B cell (primary cell): ENCODE measurements at regions of chr2 and their contacts with region 1.

Region 1: DNA sequence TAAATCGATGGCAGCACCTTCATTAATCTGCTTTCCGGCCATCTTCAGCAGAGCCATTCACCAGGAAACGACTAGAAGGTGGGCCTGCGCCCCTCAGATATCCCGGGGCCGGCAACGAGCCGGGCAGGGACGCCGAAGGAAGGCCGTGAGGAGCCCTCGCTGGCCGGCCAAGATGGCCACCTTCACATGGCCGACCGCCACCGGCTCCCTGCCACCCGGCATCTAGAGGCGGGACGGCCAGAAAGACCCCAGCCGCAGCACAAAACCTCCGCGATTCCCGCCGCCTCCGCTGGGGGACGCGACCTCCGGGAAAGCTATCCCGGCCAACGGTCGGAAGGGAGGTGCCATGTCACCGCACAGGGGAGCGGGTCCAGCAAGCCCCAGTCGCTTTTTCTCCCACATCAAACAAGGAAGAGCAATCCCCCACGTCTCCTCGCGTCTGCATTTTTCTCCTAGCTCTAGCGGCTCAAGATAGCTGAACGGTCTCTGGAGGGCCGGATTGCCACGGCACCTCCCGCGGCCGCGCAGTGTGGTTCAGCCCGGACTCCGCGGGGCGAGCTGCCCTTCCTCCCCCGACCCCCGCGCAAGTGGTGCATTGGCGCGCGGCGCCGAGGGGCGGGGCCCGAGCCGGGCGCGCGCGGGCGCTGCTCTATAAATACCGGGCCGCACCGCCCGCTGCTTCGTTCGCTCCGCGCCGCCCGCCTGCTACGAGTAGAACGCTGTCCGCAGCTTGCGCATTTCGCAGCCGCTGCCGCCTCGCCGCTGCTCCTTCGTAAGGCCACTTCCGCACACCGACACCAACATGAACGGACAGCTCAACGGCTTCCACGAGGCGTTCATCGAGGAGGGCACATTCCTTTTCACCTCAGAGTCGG is at the start of gene MAT2A:
- DNase-seq: peak; percentile 94
- ATAC-seq: peak; percentile 80
- H3K4me3 ChIP-seq: peak within 1 kb of the TSS; percentile 78 to 99 (median 92)
- H3K4me3 Mint-ChIP-seq: peak within 1 kb of the TSS; percentile 98
- H3K27ac ChIP-seq: peak within 1 kb of the TSS; percentile 81 to 89
- H3K27ac Mint-ChIP-seq: peak within 1 kb of the TSS; percentile 99
- H3K4me1 ChIP-seq: peaks cover 21 to 30% of the 10 kb centered on the region in 2 donors
- H3K4me1 Mint-ChIP-seq: peaks cover 37% of the 10 kb centered on the region
- H3K27me3 ChIP-seq: no peaks in the 10 kb centered on the region
- H3K27me3 Mint-ChIP-seq: no peaks in the 10 kb centered on the region
- CTCF ChIP-seq: peak; percentile 52
- total RNA-seq, gene MAT2A: 177 and 190 TPM in 2 replicates

Region 2: DNA sequence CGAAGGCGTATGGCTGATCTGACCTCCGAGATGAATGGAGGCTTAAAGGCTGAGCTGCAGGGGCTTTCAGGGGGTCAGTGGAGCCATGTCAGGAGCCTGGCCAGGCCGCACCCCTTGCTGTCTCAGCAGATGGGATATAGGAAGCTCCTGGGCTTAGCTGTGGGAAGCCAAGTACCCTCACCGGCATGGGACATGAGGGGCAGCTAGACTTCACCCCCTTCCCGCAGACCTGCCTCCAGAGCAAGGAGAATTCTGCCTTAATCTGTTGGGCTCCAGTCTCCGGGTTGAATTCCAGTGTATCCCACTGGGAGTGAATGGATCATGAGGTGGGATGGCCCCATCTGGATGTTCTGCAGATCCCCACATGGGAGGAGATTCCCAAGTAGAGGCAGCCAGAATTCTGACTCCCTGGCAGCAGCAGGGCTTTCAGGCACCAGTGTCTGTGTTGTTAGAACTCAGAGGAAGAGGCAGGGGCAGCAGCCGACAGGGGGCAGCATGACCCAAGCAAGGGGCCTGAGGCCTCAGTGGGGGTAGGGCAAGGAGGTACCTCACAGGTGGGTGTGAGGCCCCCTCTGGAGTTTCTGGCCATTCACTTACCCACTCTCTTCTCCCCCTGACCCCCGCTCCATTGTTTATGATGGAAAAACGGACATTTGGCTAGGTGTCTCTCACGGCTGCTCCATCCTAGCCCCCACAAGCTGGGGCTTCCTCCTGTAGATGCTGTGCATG is 147.6 kb before region 1 on chr2:
- CTCF ChIA-PET with region 1: interaction called, 4 read pairs
- POLR2A ChIA-PET with region 1: interaction called, 7 read pairs
- intact Hi-C with region 1: loop called (anchors 2 kb)
- DNase-seq: peak; percentile 80
- ATAC-seq: peak; percentile 25
- H3K4me3 ChIP-seq: no peak overlapping the region
- H3K4me3 Mint-ChIP-seq: peak overlapping the region; percentile 15
- H3K27ac ChIP-seq: peak overlapping the region; percentile 68 to 81
- H3K27ac Mint-ChIP-seq: peak overlapping the region; percentile 71
- H3K4me1 ChIP-seq: peaks cover 25 to 26% of the 10 kb centered on the region in 2 donors
- H3K4me1 Mint-ChIP-seq: peaks cover 31% of the 10 kb centered on the region
- H3K27me3 ChIP-seq: no peaks in the 10 kb centered on the region
- H3K27me3 Mint-ChIP-seq: no peaks in the 10 kb centered on the region
- CTCF ChIP-seq: peak; percentile 81

Region 3: GRCh38 chr2:85437488-85438284 is 101.0 kb before region 1 on chr2:
- CTCF ChIA-PET with region 1: interaction called, 16 read pairs
- POLR2A ChIA-PET with region 1: interaction called, 39 read pairs
- intact Hi-C with region 1: loop called (anchors 1 kb)
- DNase-seq: peak; percentile 92
- ATAC-seq: peak; percentile 87
- H3K4me3 ChIP-seq: peak overlapping the region in 4 of 5 experiments; percentile 41 to 65 (median 58)
- H3K4me3 Mint-ChIP-seq: peak overlapping the region; percentile 91
- H3K27ac ChIP-seq: peak overlapping the region; percentile 74 to 86
- H3K27ac Mint-ChIP-seq: peak overlapping the region; percentile 98
- H3K4me1 ChIP-seq: peaks cover 30 to 40% of the 10 kb centered on the region in 2 donors
- H3K4me1 Mint-ChIP-seq: peaks cover 38% of the 10 kb centered on the region
- H3K27me3 ChIP-seq: peaks cover 0 to 2% (median 0%) of the 10 kb centered on the region in 4 experiments
- H3K27me3 Mint-ChIP-seq: no peaks in the 10 kb centered on the region
- CTCF ChIP-seq: no peak

Region 4: GRCh38 chr2:85584857-85585783 is 46.4 kb after region 1 on chr2:
- CTCF ChIA-PET with region 1: no interaction called
- POLR2A ChIA-PET with region 1: no interaction called
- intact Hi-C with region 1: loop called (anchors 1 kb)
- DNase-seq: peak; percentile 43
- ATAC-seq: peak; percentile 26
- H3K4me3 ChIP-seq: peak overlapping the region; percentile 34 to 70 (median 61)
- H3K4me3 Mint-ChIP-seq: peak overlapping the region; percentile 90
- H3K27ac ChIP-seq: peak overlapping the region in 1 of 2 donors; percentile 64
- H3K27ac Mint-ChIP-seq: peak overlapping the region; percentile 90
- H3K4me1 ChIP-seq: peaks cover 25 to 41% of the 10 kb centered on the region in 2 donors
- H3K4me1 Mint-ChIP-seq: peaks cover 49% of the 10 kb centered on the region
- H3K27me3 ChIP-seq: no peaks in the 10 kb centered on the region
- H3K27me3 Mint-ChIP-seq: no peaks in the 10 kb centered on the region
- CTCF ChIP-seq: no peak

Region 5: DNA sequence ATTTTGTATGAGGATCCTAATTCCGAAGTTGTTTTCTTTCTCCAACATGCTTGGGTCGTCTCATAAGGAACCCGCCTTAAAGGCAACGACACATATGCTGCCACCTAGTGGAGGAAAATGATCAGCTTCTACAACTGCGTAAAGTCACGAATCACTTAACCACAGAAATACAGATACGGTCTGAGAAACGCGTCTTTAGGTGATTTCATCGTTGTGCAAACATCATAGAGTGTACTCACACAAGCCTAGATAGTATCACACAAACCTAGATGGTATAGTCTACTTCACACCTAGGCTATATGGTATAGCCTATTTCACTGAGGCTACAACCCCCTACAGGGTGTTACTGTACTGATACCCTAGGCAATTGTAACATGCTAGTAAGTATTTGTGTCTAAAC is 168.6 kb after region 1 on chr2:
- CTCF ChIA-PET with region 1: no interaction called
- POLR2A ChIA-PET with region 1: no interaction called
- intact Hi-C with region 1: loop called (anchors 10 kb)
- DNase-seq: peak; percentile 90
- ATAC-seq: peak; percentile 71
- H3K4me3 ChIP-seq: no peak overlapping the region
- H3K4me3 Mint-ChIP-seq: peak overlapping the region; percentile 40
- H3K27ac ChIP-seq: no peak overlapping the region
- H3K27ac Mint-ChIP-seq: peak overlapping the region; percentile 38
- H3K4me1 ChIP-seq: peaks cover 39 to 44% of the 10 kb centered on the region in 2 donors
- H3K4me1 Mint-ChIP-seq: peaks cover 39% of the 10 kb centered on the region
- H3K27me3 ChIP-seq: peaks cover 0 to 9% (median 0%) of the 10 kb centered on the region in 4 experiments
- H3K27me3 Mint-ChIP-seq: peaks cover 16% of the 10 kb centered on the region
- CTCF ChIP-seq: peak; percentile 94